ENCODE measurements at regions of chr2 and their contacts with region 1.

Region 1: DNA sequence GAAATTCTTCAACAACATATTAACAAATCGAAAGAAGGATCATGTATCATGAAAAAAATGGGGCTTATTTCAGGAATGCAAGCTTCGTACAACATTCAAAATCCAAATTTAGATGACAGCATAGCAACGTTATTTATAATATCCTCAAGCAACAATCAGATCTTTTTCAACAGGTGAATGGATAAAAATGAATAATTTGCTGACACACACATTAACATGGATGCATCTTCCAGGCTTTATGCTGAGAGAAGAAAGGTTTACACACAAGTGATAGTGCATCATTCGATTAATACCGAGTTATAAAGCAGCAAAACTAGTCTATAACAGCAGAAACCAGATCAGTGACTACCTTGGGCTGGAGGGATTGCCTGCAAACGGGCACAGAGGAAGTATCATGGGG is 209.5 kb upstream of the TPO start:
- DNase-seq: no peak
- ATAC-seq: no peak
- H3K4me3 ChIP-seq: no peak overlapping the region
- H3K27ac ChIP-seq: no peak overlapping the region
- H3K4me1 ChIP-seq: no peaks in the 10 kb centered on the region
- H3K27me3 ChIP-seq: no peaks in the 10 kb centered on the region
- CTCF ChIP-seq: no peak
- POLR2A ChIP-seq: no peak
- RAD21 ChIP-seq: no peak

Region 2: DNA sequence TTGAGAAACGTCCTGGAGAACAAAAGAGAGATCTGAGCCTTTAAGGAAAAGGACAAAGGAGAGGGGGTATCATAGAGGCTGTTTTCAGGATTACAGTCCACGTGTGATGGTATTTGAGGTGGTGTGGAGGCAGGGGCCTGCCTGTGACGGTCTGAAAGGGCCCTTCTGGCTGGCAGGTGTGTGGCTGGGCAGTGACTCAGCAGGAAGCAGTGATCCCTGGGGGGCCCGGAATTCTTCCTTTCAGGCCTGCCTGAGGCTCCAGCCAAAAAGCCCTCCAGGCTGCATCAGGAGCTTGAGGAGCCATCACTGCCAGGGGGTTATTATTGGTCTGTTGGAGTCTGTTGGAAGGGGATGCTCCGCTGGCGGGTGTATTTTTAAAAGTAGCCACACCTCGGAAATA is 429.3 kb before region 1 on chr2:
- CTCF ChIA-PET with region 1: no interaction called
- POLR2A ChIA-PET with region 1: no interaction called
- RAD21 ChIA-PET with region 1: no interaction called
- intact Hi-C with region 1: no loop called
- DNase-seq: no peak
- ATAC-seq: peak; percentile 61
- H3K4me3 ChIP-seq: no peak overlapping the region
- H3K27ac ChIP-seq: no peak overlapping the region
- H3K4me1 ChIP-seq: peaks cover 4 to 9% of the 10 kb centered on the region in 2 experiments; a peak in 3 of 4 replicates
- H3K27me3 ChIP-seq: no peaks in the 10 kb centered on the region
- CTCF ChIP-seq: no peak
- POLR2A ChIP-seq: no peak
- RAD21 ChIP-seq: no peak

Region 3: GRCh38 chr2:1238598-1239138 is 34.9 kb after region 1 on chr2:
- CTCF ChIA-PET with region 1: no interaction called
- POLR2A ChIA-PET with region 1: no interaction called
- RAD21 ChIA-PET with region 1: no interaction called
- intact Hi-C with region 1: loop called (anchors 1 kb)
- DNase-seq: no peak
- ATAC-seq: no peak
- H3K4me3 ChIP-seq: no peak overlapping the region
- H3K27ac ChIP-seq: no peak overlapping the region
- H3K4me1 ChIP-seq: no peaks in the 10 kb centered on the region
- H3K27me3 ChIP-seq: peaks cover 12% of the 10 kb centered on the region; the same call in 1 of the 2 replicates
- CTCF ChIP-seq: no peak
- POLR2A ChIP-seq: no peak
- RAD21 ChIP-seq: no peak